Activated B cell treated with CpG ODN at 0.5 μM for 24 hours (primary cell): ENCODE measurements at regions of chr1 and their contacts with region 1.

Region 1: GRCh38 chr1:23889074-23889473 is 21.0 kb upstream of the FUCA1 start:
- DNase-seq: peak; percentile 31
- ATAC-seq: peak; percentile 64
- H3K4me3 Mint-ChIP-seq: peak overlapping the region; percentile 74
- H3K27ac Mint-ChIP-seq: peak overlapping the region; percentile 97
- H3K4me1 Mint-ChIP-seq: peaks cover 81% of the 10 kb centered on the region
- H3K27me3 Mint-ChIP-seq: no peaks in the 10 kb centered on the region
- CTCF ChIP-seq: no peak

Region 2: GRCh38 chr1:23867953-23868556 is 21.0 kb before region 1 on chr1 and contains the start of gene FUCA1:
- CTCF ChIA-PET with region 1: interaction called, 3 read pairs
- POLR2A ChIA-PET with region 1: interaction called, 8 read pairs
- intact Hi-C with region 1: loop called (anchors 1 kb)
- DNase-seq: peak; percentile 92
- ATAC-seq: peak; percentile 97
- H3K4me3 Mint-ChIP-seq: peak within 1 kb of the TSS; percentile 84
- H3K27ac Mint-ChIP-seq: peak within 1 kb of the TSS; percentile 87
- H3K4me1 Mint-ChIP-seq: peaks cover 36% of the 10 kb centered on the region
- H3K27me3 Mint-ChIP-seq: no peaks in the 10 kb centered on the region
- CTCF ChIP-seq: no peak
- total RNA-seq, gene FUCA1: 9.5 and 10.7 TPM in 2 replicates

Region 3: GRCh38 chr1:23902321-23903278 is 13.5 kb after region 1 on chr1:
- CTCF ChIA-PET with region 1: no interaction called
- POLR2A ChIA-PET with region 1: interaction called, 208 read pairs
- intact Hi-C with region 1: no loop called
- DNase-seq: peak; percentile 23
- ATAC-seq: no peak
- H3K4me3 Mint-ChIP-seq: peak overlapping the region; percentile 67
- H3K27ac Mint-ChIP-seq: peak overlapping the region; percentile 93
- H3K4me1 Mint-ChIP-seq: peaks cover 83% of the 10 kb centered on the region
- H3K27me3 Mint-ChIP-seq: no peaks in the 10 kb centered on the region
- CTCF ChIP-seq: no peak

Region 4: DNA sequence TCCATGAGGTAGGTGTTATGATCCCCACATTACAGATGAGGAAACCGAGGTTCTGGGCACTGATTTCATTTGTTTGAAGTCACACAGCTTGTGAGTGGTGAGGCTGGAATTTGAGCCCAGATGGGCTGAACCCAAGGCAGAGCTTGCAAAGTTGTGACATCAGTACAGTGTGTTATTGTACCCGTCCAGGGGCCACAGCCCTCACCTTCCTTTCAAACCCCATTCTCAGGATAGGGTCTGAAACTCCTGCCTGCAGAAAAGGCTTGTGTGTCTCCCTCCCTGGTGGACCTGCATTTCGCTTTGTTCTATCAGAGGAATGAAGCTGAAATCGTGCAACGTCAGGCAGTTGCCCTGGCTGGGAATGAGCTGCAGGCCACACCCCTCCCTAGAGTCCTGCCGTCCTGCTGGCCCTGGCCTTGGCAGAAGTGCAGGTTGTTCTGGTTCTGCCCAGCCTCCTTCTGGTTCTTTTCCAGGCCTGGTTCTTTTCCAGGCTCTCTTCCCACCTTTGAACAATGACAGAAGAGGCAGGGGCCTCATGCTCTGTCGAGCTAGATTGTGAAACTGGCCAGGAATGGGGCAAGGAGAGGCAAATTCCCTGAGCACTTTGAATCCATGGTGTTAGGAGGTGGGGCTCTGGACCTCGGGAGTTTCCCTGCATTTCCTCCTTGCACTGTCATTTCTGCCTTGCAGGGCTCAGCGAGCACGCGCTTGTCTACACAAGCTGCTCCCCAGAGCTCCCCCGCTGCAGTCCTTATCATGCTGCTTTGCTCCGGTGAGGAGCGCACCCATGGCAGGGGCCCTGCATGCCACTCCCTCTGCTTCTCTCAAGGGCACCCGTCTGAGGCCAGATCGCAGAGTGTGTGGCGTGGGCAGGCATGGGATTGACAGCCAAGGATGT is 231.0 kb after region 1 on chr1:
- CTCF ChIA-PET with region 1: no interaction called
- POLR2A ChIA-PET with region 1: no interaction called
- intact Hi-C with region 1: no loop called
- DNase-seq: no peak
- ATAC-seq: no peak
- H3K4me3 Mint-ChIP-seq: no peak overlapping the region
- H3K27ac Mint-ChIP-seq: no peak overlapping the region
- H3K4me1 Mint-ChIP-seq: no peaks in the 10 kb centered on the region
- H3K27me3 Mint-ChIP-seq: peaks cover 28% of the 10 kb centered on the region
- CTCF ChIP-seq: no peak